Right cardiac atrium (tissue), 5 donors: ENCODE measurements at regions of chr17 and their contacts with region 1.

Region 1: DNA sequence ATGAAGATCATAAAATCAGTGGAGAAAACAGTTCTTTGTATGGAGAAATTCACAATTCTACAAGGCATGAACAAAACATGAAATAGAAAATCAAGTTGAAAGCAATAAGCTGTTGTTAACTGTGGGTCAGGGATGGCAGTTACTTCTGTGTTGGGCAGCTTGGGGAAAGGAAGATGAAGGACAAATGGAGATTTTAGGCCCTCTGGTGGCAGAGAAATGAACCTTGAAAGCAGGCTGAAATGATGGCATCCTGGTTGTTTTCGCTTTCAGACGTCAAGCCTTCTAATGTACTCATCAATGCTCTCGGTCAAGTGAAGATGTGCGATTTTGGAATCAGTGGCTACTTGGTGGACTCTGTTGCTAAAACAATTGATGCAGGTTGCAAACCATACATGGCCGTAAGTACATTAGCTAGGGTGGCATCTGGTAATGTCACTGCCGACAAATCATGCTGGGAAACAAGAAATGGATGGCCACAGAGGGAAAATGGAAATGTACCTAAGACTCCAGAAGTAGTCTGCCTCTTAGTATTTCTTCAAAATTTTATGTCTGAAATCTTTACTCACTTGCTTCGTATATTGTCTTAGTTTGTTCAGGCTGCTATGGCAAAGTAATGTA is 108.9 kb downstream of the MAP2K6 start:
- DNase-seq: peak in 1 of 3 donors; percentile 28
- ATAC-seq: peak; percentile 69 to 75
- H3K4me3 ChIP-seq: no peak overlapping the region
- H3K27ac ChIP-seq: no peak overlapping the region
- H3K4me1 ChIP-seq: no peaks in the 10 kb centered on the region
- H3K27me3 ChIP-seq: no peaks in the 10 kb centered on the region

Region 2: GRCh38 chr17:69335058-69335457 is 188.3 kb before region 1 on chr17:
- intact Hi-C with region 1: loop called in 3 of 4 experiments (anchors 5 to 10 kb)
- DNase-seq: no peak
- ATAC-seq: no peak
- H3K4me3 ChIP-seq: no peak overlapping the region
- H3K27ac ChIP-seq: no peak overlapping the region
- H3K4me1 ChIP-seq: no peaks in the 10 kb centered on the region
- H3K27me3 ChIP-seq: no peaks in the 10 kb centered on the region

Region 3: GRCh38 chr17:69414408-69415274 is 108.7 kb before region 1 on chr17 and contains the start of gene MAP2K6:
- intact Hi-C with region 1: loop called in 2 of 4 experiments (anchors 10 kb)
- DNase-seq: peak; percentile 86 to 93 (median 91)
- ATAC-seq: peak; percentile 98 to 99
- H3K4me3 ChIP-seq: peak within 1 kb of the TSS; percentile 73
- H3K27ac ChIP-seq: no peak within 1 kb of the TSS
- H3K4me1 ChIP-seq: no peaks in the 10 kb centered on the region
- H3K27me3 ChIP-seq: no peaks in the 10 kb centered on the region
- total RNA-seq, gene MAP2K6: 2.1 to 4.1 (median 3.2) TPM

Region 4: DNA sequence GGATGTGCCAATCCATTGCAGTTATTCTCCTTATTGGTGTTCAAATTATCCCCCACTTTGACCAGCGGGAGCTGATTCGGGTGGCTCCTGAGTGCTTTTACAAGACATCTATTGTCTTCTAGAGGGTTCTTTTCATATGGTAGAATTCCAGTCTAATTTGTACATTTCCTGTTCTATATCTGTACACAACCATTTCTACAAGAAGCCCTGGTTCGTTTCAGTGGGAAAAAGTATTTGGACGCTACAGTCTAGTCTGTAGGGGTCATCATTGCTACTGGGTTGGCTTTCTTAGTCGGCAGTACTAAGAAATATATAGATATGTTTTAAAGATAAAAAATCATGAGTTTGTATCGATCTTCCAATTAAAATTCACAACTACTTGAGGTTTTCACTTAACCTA is 153.8 kb after region 1 on chr17:
- intact Hi-C with region 1: no loop called
- DNase-seq: no peak
- ATAC-seq: no peak
- H3K4me3 ChIP-seq: no peak overlapping the region
- H3K27ac ChIP-seq: no peak overlapping the region
- H3K4me1 ChIP-seq: no peaks in the 10 kb centered on the region
- H3K27me3 ChIP-seq: no peaks in the 10 kb centered on the region